K562 (cell line): ENCODE measurements at regions of chr12 and their contacts with region 1.

Region 1: GRCh38 chr12:99043319-99043914 is 398.3 kb downstream of the APAF1 start:
- DNase-seq: peak; percentile 35 to 67 (median 54)
- ATAC-seq: peak; percentile 71
- H3K4me3 ChIP-seq: no peak overlapping the region
- H3K27ac ChIP-seq: no peak overlapping the region
- H3K4me1 ChIP-seq: no peaks in the 10 kb centered on the region
- H3K27me3 ChIP-seq: no peaks in the 10 kb centered on the region
- CTCF ChIP-seq: peak; percentile 66 to 74 (median 69)
- EP300 ChIP-seq: no peak
- POLR2A ChIP-seq: no peak
- RAD21 ChIP-seq: peak; percentile 64 to 79

Region 2: GRCh38 chr12:99068993-99069747 is 25.8 kb after region 1 on chr12:
- CTCF ChIA-PET with region 1: no interaction called
- POLR2A ChIA-PET with region 1: no interaction called
- in situ Hi-C with region 1: no loop called
- intact Hi-C with region 1: no loop called
- DNase-seq: no peak
- ATAC-seq: no peak
- H3K4me3 ChIP-seq: no peak overlapping the region
- H3K27ac ChIP-seq: no peak overlapping the region
- H3K4me1 ChIP-seq: no peaks in the 10 kb centered on the region
- H3K27me3 ChIP-seq: no peaks in the 10 kb centered on the region
- CTCF ChIP-seq: no peak
- EP300 ChIP-seq: no peak
- POLR2A ChIP-seq: no peak
- RAD21 ChIP-seq: no peak

Region 3: GRCh38 chr12:99619389-99620158 is 576.2 kb after region 1 on chr12:
- CTCF ChIA-PET with region 1: no interaction called
- POLR2A ChIA-PET with region 1: no interaction called
- in situ Hi-C with region 1: no loop called
- intact Hi-C with region 1: loop called (anchors 2 kb)
- DNase-seq: peak; percentile 9 to 12 (median 10)
- ATAC-seq: peak; percentile 70; the same call in 2 of the 3 replicates
- H3K4me3 ChIP-seq: no peak overlapping the region
- H3K27ac ChIP-seq: no peak overlapping the region
- H3K4me1 ChIP-seq: no peaks in the 10 kb centered on the region
- H3K27me3 ChIP-seq: no peaks in the 10 kb centered on the region
- CTCF ChIP-seq: peak; percentile 29 to 52 (median 47); a peak in 5 of 6 replicates
- EP300 ChIP-seq: no peak
- POLR2A ChIP-seq: no peak
- RAD21 ChIP-seq: peak in 1 of 2 experiments; percentile 59; a peak in 3 of 4 replicates

Region 4: GRCh38 chr12:99767809-99768208 is 724.4 kb after region 1 on chr12:
- CTCF ChIA-PET with region 1: no interaction called
- POLR2A ChIA-PET with region 1: no interaction called
- in situ Hi-C with region 1: no loop called
- intact Hi-C with region 1: loop called (anchors 5 kb)
- DNase-seq: peak in 1 of 4 experiments; percentile 1
- ATAC-seq: no peak
- H3K4me3 ChIP-seq: no peak overlapping the region
- H3K27ac ChIP-seq: no peak overlapping the region
- H3K4me1 ChIP-seq: no peaks in the 10 kb centered on the region
- H3K27me3 ChIP-seq: no peaks in the 10 kb centered on the region
- CTCF ChIP-seq: peak in 1 of 3 experiments; percentile 22; a peak in 2 of 6 replicates
- EP300 ChIP-seq: no peak
- POLR2A ChIP-seq: no peak
- RAD21 ChIP-seq: 0 out of 4 replicates have a peak, but pooled peaks of 1 of the 2 experiments have one; percentile 6

Region 5: DNA sequence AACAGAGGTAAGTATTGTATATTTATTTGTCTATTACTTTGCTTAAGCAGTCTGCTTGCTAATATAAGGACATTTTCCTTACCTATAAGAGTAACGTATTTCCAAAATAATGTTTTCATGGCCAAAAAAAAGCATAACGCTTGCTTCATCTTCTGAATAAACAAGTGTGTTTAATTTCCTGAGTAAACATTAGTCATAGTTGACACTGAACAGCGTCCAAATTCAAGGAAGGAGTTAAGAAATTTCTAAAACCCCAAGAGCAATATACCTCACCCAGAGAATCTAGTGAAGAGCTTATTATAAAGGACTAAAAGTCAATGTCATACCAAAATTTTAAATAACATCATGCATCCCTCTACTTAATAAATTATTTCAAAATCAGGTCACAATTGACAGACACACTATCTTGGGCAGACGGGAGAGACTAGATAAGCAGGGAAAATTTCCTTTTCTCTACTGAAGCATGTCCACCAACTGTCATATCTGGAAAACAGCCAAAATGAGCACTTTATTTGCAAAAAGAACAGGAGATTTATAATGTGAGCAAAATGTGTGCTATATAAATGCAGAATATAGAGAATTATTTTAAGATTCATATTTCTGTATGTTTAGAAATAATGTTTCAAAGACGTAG is 916.2 kb after region 1 on chr12:
- CTCF ChIA-PET with region 1: no interaction called
- POLR2A ChIA-PET with region 1: no interaction called
- in situ Hi-C with region 1: loop called (anchors 10 kb)
- intact Hi-C with region 1: no loop called
- DNase-seq: no peak
- ATAC-seq: no peak
- H3K4me3 ChIP-seq: no peak overlapping the region
- H3K27ac ChIP-seq: no peak overlapping the region
- H3K4me1 ChIP-seq: no peaks in the 10 kb centered on the region
- H3K27me3 ChIP-seq: no peaks in the 10 kb centered on the region
- CTCF ChIP-seq: no peak
- EP300 ChIP-seq: no peak
- POLR2A ChIP-seq: no peak
- RAD21 ChIP-seq: no peak

Region 6: DNA sequence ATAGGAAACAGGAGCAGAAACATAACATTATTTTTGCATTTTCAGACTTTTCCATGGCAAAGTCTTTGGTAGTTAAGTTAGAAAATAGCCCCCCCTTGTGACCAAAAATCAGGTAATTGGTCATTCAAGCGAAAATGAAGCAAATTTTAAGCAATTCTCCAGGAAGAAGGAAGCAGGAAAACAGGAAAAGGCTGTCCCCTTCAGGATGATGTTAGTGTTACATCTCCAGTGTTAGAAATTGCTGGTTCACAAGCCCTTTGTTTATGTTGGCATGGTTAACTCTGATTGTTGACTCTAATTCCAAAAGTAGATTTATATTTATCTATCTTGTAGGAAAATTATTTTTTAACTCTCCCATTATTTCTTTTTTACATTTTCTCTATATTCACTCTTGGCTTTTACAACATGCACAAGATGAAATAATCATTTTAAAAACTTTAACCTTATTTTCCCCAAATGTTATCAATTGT is 1511.2 kb after region 1 on chr12:
- CTCF ChIA-PET with region 1: interaction called, 6 read pairs
- POLR2A ChIA-PET with region 1: no interaction called
- in situ Hi-C with region 1: no loop called
- intact Hi-C with region 1: loop called (anchors 10 kb)
- DNase-seq: peak; percentile 53 to 79 (median 68)
- ATAC-seq: peak; percentile 95
- H3K4me3 ChIP-seq: no peak overlapping the region
- H3K27ac ChIP-seq: no peak overlapping the region
- H3K4me1 ChIP-seq: no peaks in the 10 kb centered on the region
- H3K27me3 ChIP-seq: no peaks in the 10 kb centered on the region
- CTCF ChIP-seq: peak; percentile 89 to 99 (median 91)
- EP300 ChIP-seq: no peak
- POLR2A ChIP-seq: no peak
- RAD21 ChIP-seq: peak; percentile 94 to 96